ENCODE measurements at regions of chr11 and their contacts with region 1.

Region 1: DNA sequence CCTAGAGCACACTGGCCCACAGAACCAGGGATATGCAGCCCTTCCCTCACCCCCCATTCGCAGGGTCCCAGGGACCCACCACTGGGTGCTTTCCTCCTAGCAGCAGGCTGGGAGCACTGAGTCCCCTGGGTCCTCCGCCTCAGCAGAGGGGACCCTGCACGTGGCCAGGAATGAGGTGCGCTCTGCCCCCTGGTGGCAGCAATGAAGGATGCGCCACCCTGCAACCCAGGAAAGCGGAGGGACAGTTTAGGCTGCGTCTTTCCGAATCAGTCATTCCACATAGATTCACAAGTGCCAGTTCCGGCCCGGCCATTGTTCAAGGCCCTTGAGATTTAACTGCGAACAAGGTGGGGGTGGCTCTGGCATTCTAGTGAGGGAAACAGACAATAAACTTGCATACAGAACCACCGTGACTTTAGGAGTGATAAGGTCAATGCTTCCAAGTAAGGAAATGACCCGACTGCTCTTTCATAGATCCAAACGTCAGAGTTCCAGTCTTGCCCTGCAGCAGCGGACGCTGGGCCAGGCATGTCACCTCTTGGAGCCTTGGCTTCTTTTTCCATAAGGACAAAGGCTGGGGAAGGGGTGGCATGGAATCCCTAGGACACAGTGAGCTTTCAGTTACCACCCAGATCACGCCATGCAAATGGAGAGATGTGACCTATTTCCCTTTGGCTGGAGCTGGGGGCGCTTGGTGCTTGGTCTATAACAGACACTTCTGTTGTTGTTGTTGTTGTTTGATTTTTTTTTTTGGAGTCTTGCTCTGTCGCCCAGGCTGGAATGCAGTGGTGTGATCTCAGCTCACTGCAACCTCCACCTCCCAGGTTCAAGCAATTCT is 7.7 kb downstream of the RIN1 start:
- DNase-seq: peak; percentile 45
- H3K4me3 ChIP-seq: no peak overlapping the region
- H3K27ac ChIP-seq: no peak overlapping the region
- H3K4me1 ChIP-seq: peaks cover 26% of the 10 kb centered on the region
- H3K27me3 ChIP-seq: no peaks in the 10 kb centered on the region
- CTCF ChIP-seq: peak; percentile 89 to 96

Region 2: DNA sequence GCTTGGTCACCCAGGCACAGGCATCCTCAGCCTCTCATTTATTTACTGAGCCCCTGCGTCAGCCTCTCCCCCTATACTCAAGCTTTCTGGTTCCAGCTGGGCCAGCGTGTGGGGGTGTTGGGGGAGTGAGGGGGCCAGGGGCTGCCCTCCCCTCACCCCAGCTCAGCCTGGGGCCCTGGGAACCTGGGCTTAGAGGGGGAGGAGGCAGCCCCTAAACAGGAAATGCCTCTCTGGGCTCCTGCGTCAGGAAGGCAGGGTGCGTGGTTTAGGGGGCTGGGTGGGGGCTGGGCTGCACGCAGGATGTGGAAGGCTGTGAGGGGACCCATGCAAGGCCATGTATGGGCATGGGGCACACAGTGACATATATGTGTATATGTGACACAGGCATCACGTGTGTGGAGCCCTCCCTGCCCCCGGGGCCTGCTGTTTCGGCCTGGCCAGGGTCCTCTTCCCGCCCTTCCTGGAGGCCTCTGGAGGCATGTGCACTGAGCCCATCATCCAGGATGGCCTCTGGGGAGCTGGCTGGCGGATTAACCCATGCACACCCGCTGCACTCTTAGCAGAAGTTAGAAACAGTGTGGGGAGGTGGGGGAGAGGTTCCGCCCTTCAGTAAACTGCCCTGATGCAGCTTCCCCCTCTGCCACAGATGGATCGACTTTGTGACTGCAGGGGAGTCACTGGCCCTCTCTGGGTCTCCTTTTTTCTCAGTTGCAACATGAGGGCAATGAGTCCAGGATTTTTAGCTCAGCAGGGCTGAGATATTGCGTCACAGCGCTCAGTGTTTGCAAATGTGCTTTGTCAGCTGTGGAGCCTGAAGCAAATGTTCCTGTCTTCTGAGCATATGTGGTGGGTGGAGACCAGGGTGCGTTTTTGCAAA is 10.6 kb before region 1 on chr11:
- CTCF ChIA-PET with region 1: interaction called, 8 read pairs
- dilution Hi-C with region 1: no loop called
- in situ Hi-C with region 1: no loop called
- intact Hi-C with region 1: loop called (anchors 1 kb)
- DNase-seq: peak; percentile 48
- H3K4me3 ChIP-seq: no peak overlapping the region
- H3K27ac ChIP-seq: no peak overlapping the region
- H3K4me1 ChIP-seq: peaks cover 16% of the 10 kb centered on the region
- H3K27me3 ChIP-seq: no peaks in the 10 kb centered on the region
- CTCF ChIP-seq: no peak

Region 3: GRCh38 chr11:66491315-66491935 is 162.9 kb after region 1 on chr11:
- CTCF ChIA-PET with region 1: no interaction called
- dilution Hi-C with region 1: no loop called
- in situ Hi-C with region 1: no loop called
- intact Hi-C with region 1: no loop called
- DNase-seq: no peak
- H3K4me3 ChIP-seq: no peak overlapping the region
- H3K27ac ChIP-seq: no peak overlapping the region
- H3K4me1 ChIP-seq: no peaks in the 10 kb centered on the region
- H3K27me3 ChIP-seq: no peaks in the 10 kb centered on the region
- CTCF ChIP-seq: peak in 1 of 2 donors; percentile 10

Measured in mammary epithelial cell (primary cell).